Dorsolateral prefrontal cortex (tissue), 120 donors: ENCODE measurements at regions of chr12 and their contacts with region 1.

Region 1: DNA sequence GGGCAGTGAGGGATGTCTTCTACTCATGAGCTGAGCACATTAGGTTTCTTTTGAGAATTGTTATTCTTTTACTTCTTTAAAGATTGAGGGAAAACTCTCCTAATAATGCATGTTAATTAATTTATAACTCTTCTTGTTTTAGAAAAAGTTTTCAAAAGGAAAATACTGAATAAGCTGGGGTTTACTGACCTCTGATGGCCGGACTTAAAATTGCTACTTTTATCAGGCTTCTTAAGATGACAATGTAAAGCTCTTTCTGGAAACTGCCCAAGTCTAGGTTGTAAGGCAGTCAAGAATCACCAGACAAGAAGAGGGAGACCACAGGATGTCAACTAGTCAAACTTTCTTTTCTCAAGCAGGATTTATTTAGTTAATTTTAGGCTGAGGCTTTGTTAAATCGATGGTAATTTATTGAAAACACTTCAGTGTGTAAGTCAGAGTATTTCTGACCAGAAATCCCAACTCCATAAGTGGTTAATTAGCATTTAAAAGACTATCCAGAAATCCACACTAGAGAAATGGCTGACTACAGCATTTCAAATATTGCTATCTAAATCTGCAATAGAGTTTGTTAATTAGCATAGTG is 82.1 kb downstream of the AVPR1A start:
- DNase-seq: no peak
- H3K4me3 ChIP-seq: no peak overlapping the region
- H3K27ac ChIP-seq: no peak overlapping the region
- H3K27me3 ChIP-seq: no peaks in the 10 kb centered on the region
- CTCF ChIP-seq: peak; percentile 47 to 79 (median 66)

Region 2: DNA sequence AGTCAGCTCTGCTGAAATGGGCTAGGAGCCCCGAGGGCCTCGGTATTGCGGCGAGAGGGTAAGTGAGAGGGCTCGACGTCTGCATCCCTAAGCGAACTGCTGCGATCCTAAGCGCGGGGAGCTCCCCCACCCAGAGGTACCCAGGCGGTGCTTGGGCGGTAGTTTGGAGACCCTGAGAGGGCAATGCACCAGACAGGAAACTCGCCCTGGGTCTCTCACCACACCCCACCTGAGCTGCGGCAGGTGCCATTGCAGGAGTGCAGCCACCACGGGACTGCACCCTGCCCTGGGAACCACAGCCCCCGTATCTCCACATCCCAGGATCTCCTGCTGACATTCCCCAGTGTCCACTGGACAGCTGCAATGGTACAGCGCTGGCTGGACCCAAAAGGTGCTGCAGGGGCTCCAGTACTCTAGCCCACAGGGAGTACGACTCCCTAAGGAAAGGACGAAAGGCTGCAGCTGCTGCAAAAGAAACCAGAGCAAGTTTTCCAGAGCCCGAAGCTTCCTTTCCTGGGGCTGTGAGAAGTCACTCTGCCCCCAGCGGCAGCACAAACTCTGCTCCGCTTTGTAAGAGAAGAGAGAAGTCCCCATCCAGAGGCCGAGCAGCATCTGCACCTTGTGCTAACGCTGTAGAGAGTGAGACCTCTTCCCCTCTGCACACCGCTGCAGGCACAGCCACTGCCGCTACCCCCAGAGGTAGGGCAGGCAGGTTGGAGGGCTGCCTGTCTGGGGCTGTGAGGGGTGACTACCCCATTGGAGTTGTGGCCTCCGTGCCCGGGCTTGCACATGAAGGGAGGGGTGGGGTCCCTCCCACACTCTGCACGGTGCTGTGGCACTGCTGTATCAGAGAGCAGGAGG is 633.4 kb before region 1 on chr12:
- intact Hi-C with region 1: loop called in 1 of 2 experiments (anchors 10 kb)
- DNase-seq: peak; percentile 5 to 73 (median 60)
- H3K4me3 ChIP-seq: peak overlapping the region; percentile 36 to 82 (median 63)
- H3K27ac ChIP-seq: peak overlapping the region in 1 of 59 donors; percentile 19
- H3K27me3 ChIP-seq: peaks cover 0 to 20% (median 0%) of the 10 kb centered on the region in 45 donors
- CTCF ChIP-seq: peak in 55 of 56 donors; percentile 16 to 69 (median 53)